ENCODE measurements at regions of chr2 and their contacts with region 1.

Region 1: DNA sequence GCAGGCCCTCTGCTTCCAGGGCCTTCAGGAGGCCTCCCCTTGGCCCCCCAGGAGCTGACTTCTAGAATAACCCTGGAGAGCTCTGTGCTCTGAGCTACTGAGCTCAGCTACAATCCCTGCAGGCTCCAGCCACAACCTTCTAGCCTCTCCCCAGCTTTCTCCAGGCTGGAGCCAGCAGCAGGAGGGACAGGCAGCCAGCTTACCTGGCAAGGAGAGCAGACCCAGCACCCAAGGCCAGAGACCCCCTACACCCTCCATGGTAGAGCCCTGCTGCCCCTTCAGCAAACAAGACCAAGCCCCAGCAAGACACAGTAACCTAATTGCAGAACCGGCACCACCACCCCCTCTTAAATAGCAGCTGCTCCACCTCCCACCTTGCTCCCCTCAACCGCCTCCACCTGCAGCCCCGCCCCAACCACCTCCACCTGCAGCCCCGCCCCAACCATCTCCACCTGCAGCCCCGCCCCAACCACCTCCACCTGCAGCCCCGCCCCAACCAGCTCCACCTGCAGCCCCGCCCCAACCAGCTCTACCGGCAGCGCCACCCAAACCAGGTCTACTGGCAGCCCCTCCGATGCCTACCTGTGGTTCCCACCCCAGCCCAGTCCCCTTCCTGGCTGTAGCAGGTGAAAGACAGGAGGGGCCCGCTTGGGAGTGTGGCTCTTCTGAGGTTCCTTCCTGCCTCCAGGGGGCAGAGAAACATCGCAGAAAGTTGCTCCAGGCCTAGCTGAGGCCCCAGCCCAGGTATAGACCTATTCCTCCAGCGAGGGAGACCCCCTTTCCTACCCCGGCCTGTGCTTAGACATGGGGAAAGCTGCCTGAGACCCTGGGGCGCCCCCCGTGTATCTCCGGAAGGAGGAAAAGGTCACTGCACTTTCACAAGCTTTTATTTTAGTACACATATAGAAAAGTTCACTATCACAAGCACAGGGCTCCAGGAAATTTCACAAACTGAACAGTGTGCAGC is at the start of gene ASTL:
- DNase-seq: peak; percentile 78
- CTCF ChIP-seq: peak; percentile 77

Region 2: DNA sequence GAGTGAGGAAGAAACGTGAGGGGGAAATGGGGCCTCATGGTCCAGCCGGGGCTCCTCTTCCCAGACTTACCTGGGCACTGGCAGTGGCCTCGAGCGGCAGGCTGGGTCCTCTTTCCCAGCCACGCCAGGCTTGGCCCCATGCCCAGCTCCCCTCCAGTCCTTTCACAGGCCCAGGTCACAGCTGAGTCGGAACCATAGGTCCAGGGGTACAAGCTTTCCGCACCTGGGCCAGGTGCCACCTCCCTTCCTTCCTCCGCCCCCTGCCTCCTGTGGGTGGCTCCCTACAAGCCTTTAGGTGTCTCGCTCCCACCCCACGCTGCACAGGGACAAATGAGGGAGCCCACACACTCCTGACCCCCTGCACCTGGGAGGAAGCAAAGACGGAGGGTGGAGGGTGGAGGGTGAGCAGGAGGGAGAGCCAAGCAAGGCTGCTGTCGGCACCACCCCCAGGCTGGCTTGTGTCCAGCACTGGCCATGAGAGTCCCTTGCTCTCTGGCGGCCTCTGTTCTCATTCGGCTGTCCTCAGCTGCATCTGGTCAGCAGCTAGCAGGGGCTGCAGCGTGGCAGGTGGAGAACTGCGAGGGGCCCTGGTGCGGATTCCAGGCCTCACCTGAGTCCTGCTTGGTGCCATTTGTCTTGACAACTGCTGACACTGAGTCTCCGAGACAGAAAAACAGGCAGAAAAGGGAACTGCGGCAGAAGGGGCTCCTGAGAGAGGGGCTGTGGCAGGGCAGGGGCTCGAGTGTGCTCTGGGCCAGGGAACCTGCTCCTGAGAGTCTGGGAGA is 48.9 kb before region 1 on chr2:
- CTCF ChIA-PET with region 1: no interaction called
- POLR2A ChIA-PET with region 1: no interaction called
- DNase-seq: peak; percentile 16
- CTCF ChIP-seq: no peak

Region 3: GRCh38 chr2:96116879-96117697 is 21.4 kb before region 1 on chr2:
- CTCF ChIA-PET with region 1: interaction called, 25 read pairs
- POLR2A ChIA-PET with region 1: no interaction called
- DNase-seq: peak; percentile 92
- CTCF ChIP-seq: peak; percentile 90

Region 4: GRCh38 chr2:96186562-96186961 is 48.1 kb after region 1 on chr2:
- CTCF ChIA-PET with region 1: interaction called, 46 read pairs
- POLR2A ChIA-PET with region 1: interaction called, 3 read pairs
- DNase-seq: no peak
- CTCF ChIP-seq: no peak

Region 5: DNA sequence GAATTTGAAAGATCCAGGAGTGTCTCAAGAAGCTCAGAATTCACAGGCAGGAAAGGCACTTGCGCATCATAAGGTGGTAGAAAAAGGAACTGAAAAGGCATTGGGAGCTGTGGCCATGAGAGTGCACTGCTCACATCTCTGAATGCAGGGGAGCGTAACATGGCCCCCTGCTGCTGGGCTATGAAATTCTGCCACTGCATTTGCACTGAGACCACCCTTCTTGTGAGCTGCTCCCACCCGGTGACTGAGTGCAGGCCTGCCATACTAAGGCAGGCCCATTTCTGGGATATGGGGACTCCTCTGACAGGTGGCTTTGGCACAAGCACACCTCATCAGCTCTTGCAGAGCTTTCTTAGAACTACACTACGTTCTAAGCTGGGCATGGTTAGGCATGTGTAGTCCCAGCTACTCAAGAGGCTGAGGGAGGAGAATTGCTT is 95.4 kb after region 1 on chr2:
- CTCF ChIA-PET with region 1: interaction called, 12 read pairs
- POLR2A ChIA-PET with region 1: interaction called, 5 read pairs
- DNase-seq: peak; percentile 70
- CTCF ChIP-seq: peak; percentile 45

Region 6: GRCh38 chr2:96265840-96266679 is 127.6 kb after region 1 on chr2 and contains the starts of genes CIAO1 and TMEM127:
- CTCF ChIA-PET with region 1: interaction called, 25 read pairs
- POLR2A ChIA-PET with region 1: no interaction called
- DNase-seq: peak; percentile 99
- CTCF ChIP-seq: peak; percentile 14